Ovary (tissue), 10 donors: ENCODE measurements at regions of chr14 and their contacts with region 1.

Region 1: GRCh38 chr14:104078031-104078455 is 7.5 kb upstream of the ASPG start:
- DNase-seq: peak; percentile 89 to 94 (median 91)
- H3K4me3 ChIP-seq: no peak overlapping the region
- H3K27ac ChIP-seq: no peak overlapping the region
- H3K4me1 ChIP-seq: no peaks in the 10 kb centered on the region
- H3K27me3 ChIP-seq: no peaks in the 10 kb centered on the region
- CTCF ChIP-seq: peak; percentile 99
- EP300 ChIP-seq: no peak
- POLR2A ChIP-seq: no peak

Region 2: GRCh38 chr14:104094709-104095438 is 16.8 kb after region 1 on chr14:
- intact Hi-C with region 1: no loop called
- DNase-seq: peak in 4 of 5 donors; percentile 66 to 80 (median 74)
- H3K4me3 ChIP-seq: no peak overlapping the region
- H3K27ac ChIP-seq: no peak overlapping the region
- H3K4me1 ChIP-seq: peaks cover 8% of the 10 kb centered on the region
- H3K27me3 ChIP-seq: no peaks in the 10 kb centered on the region
- CTCF ChIP-seq: peak; percentile 56 to 79 (median 78)
- EP300 ChIP-seq: no peak
- POLR2A ChIP-seq: no peak

Region 3: DNA sequence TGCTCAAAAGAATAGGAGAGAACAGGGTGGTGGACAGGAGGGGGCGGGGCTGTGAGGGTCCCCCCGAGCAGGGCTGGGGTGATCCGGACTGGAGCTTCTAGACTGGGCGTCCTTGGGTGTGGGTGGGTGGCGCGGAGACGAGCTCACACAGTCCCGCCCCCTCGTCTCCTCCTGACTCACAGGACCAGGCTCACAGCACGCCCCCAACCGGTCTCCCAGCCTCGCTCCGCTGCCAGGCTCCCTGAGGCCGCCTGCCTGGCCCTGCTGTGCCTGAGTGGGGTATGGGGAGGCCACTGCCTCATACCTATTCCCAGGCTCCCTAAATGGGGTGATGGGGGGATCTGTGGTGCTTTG is 30.1 kb after region 1 on chr14:
- intact Hi-C with region 1: no loop called
- DNase-seq: peak; percentile 8 to 41 (median 18)
- H3K4me3 ChIP-seq: no peak overlapping the region
- H3K27ac ChIP-seq: no peak overlapping the region
- H3K4me1 ChIP-seq: no peaks in the 10 kb centered on the region
- H3K27me3 ChIP-seq: no peaks in the 10 kb centered on the region
- CTCF ChIP-seq: no peak
- EP300 ChIP-seq: no peak
- POLR2A ChIP-seq: no peak

Region 4: GRCh38 chr14:104314251-104314941 is 236.4 kb after region 1 on chr14:
- intact Hi-C with region 1: no loop called
- DNase-seq: peak in 2 of 5 donors; percentile 6 to 22
- H3K4me3 ChIP-seq: no peak overlapping the region
- H3K27ac ChIP-seq: no peak overlapping the region
- H3K4me1 ChIP-seq: no peaks in the 10 kb centered on the region
- H3K27me3 ChIP-seq: no peaks in the 10 kb centered on the region
- CTCF ChIP-seq: no peak
- EP300 ChIP-seq: no peak
- POLR2A ChIP-seq: no peak

Region 5: DNA sequence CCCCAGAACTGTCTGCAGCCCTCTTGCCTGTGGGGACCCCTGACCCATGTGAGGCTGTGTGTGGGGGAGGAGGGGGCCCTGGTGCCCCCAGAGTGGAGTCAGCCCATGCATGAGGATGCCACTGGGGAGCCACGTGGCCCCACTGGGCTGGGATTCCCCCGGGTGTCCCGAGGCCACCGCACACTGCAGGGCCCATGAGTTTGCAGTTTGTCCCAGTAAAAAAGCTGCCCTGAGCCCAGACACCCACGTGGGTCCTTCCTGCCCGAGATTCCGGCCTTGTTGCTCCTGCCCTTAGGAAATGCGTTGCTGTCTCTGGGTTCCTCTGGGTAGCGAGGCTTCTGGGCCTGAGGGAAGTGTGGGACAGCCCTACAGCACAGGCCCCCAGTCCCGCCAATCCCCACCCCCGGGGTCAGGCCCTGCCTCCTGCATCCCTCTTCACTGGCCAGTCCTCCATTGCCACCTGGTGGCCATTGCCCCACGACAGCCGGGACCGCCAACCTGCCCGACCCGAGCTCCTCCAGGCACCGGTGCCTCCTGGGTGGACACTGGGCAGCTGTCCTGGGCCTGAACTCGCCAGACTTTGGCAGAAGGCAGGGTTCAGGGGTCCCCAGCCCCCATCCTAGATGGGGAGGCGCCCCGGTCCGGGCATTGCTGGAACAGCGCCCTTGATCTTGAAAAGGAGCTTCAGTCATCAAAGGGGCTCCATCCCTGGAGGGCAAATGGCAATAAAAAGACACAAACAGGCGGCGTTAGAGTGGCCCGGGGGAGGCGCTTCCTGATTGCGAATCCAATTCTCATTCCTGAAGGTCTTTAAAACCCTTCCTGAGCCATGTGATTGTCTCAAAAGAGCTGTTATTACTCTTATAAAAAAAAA is 485.9 kb after region 1 on chr14:
- intact Hi-C with region 1: loop called in 3 of 4 experiments (anchors 5 to 10 kb)
- DNase-seq: peak; percentile 62 to 84 (median 81)
- H3K4me3 ChIP-seq: no peak overlapping the region
- H3K27ac ChIP-seq: no peak overlapping the region
- H3K4me1 ChIP-seq: no peaks in the 10 kb centered on the region
- H3K27me3 ChIP-seq: no peaks in the 10 kb centered on the region
- CTCF ChIP-seq: peak; percentile 79 to 92 (median 90)
- EP300 ChIP-seq: no peak
- POLR2A ChIP-seq: peak; percentile 21

Region 6: GRCh38 chr14:104639889-104640548 is 562.0 kb after region 1 on chr14:
- intact Hi-C with region 1: loop called in 1 of 4 experiments (anchors 10 kb)
- DNase-seq: peak in 3 of 5 donors; percentile 29 to 62 (median 55)
- H3K4me3 ChIP-seq: no peak overlapping the region
- H3K27ac ChIP-seq: no peak overlapping the region
- H3K4me1 ChIP-seq: no peaks in the 10 kb centered on the region
- H3K27me3 ChIP-seq: no peaks in the 10 kb centered on the region
- CTCF ChIP-seq: peak; percentile 20 to 55 (median 40)
- EP300 ChIP-seq: no peak
- POLR2A ChIP-seq: no peak